ENCODE measurements at regions of chr18 and their contacts with region 1.

Region 1: GRCh38 chr18:49123431-49123830 is 172.7 kb upstream of the SMAD7 start:
- DNase-seq: no peak
- H3K4me3 ChIP-seq: no peak overlapping the region
- H3K27ac ChIP-seq: no peak overlapping the region
- H3K4me1 ChIP-seq: no peaks in the 10 kb centered on the region
- CTCF ChIP-seq: no peak

Region 2: GRCh38 chr18:50791599-50792438 is 1668.4 kb after region 1 on chr18:
- CTCF ChIA-PET with region 1: no interaction called
- POLR2A ChIA-PET with region 1: interaction called, 11 read pairs
- intact Hi-C with region 1: no loop called
- DNase-seq: no peak
- H3K4me3 ChIP-seq: no peak overlapping the region
- H3K27ac ChIP-seq: no peak overlapping the region
- H3K4me1 ChIP-seq: no peaks in the 10 kb centered on the region
- CTCF ChIP-seq: no peak

Measured in OCI-LY7 (cell line).